ENCODE measurements at regions of chr21 and their contacts with region 1.

Region 1: DNA sequence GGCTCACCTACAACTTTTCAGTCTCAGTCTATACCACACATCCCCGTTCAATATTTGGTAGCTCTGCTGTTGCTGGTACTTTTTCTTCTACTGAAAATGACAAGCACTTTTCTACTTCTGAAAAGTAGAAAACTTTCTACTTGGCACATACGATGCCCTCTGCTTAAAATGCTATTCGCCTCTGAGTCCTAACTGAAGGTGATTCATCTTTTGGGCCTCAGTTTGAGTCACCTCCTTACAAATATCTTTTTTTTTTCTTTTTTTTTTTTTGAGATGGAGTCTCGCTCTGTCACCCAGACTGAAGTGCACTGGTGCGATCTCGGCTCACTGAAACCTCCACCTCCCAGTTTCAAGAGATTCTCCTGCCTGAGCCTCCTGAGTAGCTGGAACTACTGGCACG is 136.0 kb upstream of the CYYR1 start:
- DNase-seq: no peak
- H3K4me3 ChIP-seq: no peak overlapping the region
- H3K4me3 Mint-ChIP-seq: no peak overlapping the region
- H3K27ac ChIP-seq: no peak overlapping the region
- H3K27ac Mint-ChIP-seq: no peak overlapping the region
- H3K4me1 ChIP-seq: no peaks in the 10 kb centered on the region
- H3K4me1 Mint-ChIP-seq: no peaks in the 10 kb centered on the region
- H3K27me3 ChIP-seq: no peaks in the 10 kb centered on the region
- H3K27me3 Mint-ChIP-seq: no peaks in the 10 kb centered on the region
- CTCF ChIP-seq: no peak

Region 2: DNA sequence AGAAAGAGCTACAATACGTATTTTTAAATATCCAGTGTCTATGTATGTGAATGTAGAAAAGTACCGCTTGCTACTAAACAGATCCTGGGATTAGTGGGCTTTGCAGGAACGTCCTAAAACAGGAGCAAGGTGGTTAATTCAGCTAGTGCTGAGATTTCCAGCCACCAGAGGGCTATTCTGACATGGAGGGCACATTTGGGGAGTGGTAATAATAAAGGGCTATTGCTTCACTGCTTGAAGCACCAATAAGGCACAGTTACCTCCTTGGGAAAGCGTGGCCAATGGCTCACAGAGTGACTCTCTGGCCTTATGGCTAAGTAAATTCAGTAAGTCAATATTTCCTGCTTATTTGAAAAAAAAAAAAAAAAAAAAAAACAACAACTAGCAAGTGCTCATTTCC is 821.9 kb before region 1 on chr21:
- intact Hi-C with region 1: loop called in 1 of 2 experiments (anchors 5 kb)
- DNase-seq: no peak
- H3K4me3 ChIP-seq: no peak overlapping the region
- H3K4me3 Mint-ChIP-seq: no peak overlapping the region
- H3K27ac ChIP-seq: no peak overlapping the region
- H3K27ac Mint-ChIP-seq: no peak overlapping the region
- H3K4me1 ChIP-seq: no peaks in the 10 kb centered on the region
- H3K4me1 Mint-ChIP-seq: peaks cover 4% of the 10 kb centered on the region
- H3K27me3 ChIP-seq: no peaks in the 10 kb centered on the region
- H3K27me3 Mint-ChIP-seq: no peaks in the 10 kb centered on the region
- CTCF ChIP-seq: no peak

Region 3: DNA sequence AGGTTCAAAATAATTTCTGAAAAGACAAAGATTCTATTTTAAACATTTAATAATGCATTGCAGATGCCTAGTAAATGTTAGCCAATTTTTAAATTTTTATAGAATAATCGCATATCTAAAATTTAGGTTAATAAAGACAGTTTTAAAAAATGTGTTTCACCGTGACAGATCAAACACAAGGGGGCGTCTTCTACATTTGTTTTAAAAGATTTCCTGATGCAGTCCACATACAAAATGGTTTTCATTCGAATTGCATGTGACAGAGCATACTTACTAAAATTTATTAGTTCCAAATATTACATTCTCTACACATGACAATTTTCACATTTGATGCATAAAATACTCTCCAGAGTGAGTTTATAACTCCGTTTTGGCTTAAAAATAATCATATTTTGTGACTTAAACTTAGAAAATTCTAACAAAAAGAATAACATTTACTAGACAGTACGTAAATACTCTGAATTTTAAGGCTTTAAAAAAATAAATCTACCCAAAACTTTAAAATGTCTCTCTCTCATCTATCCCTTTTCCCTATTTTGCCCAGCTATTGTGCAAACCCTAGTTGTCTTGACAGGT is 60.6 kb after region 1 on chr21:
- intact Hi-C with region 1: loop called in 1 of 2 experiments (anchors 10 kb)
- DNase-seq: no peak
- H3K4me3 ChIP-seq: no peak overlapping the region
- H3K4me3 Mint-ChIP-seq: no peak overlapping the region
- H3K27ac ChIP-seq: no peak overlapping the region
- H3K27ac Mint-ChIP-seq: no peak overlapping the region
- H3K4me1 ChIP-seq: no peaks in the 10 kb centered on the region
- H3K4me1 Mint-ChIP-seq: no peaks in the 10 kb centered on the region
- H3K27me3 ChIP-seq: no peaks in the 10 kb centered on the region
- H3K27me3 Mint-ChIP-seq: peaks cover 0 to 2% (median 0%) of the 10 kb centered on the region in 3 donors
- CTCF ChIP-seq: peak; percentile 19

Region 4: DNA sequence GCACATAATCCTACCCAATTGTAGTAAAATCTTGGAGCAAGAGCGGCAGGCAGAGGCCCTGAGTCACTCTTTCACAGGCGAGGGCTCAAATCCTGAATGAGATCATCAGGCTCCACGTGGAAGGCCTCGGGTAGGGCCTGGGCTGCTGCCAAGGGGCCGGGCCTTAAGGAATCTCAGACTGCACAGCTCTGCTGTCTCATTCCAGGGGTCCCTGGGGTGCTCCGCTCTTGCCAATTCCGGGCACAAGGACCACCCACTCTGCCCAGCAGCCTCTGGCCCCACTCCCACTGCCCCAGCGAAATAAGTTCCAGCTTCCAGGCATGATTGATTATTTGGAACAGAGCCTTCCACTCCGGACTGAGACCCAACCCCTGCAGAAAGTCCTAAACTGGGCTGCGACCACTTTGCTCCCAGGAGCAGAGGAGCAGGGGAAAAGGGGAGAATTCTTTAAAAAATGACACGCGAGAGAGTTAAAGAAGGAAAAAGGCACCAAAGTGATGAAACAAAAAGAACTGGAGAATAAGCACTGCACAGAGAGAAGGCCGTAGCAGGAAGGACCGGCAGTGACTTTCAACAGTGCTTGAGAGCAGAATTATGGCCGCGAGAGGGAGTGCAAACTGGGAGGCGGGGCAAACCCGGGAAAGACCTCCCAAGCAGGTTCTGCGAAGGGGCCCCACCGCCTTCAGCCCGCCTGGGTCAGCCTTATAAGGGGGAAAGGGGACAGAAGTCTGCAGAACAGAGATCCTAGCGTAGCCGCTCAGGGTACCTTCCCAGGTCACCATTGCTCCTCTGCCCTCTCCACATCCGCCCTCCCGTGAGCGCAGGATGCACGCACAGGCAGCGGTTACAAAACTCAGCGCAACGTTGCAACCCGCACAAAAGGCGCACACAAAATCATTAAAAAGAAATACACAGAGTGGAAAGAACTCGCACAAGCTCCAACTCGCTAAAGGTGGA is 134.2 kb after region 1 on chr21:
- intact Hi-C with region 1: no loop called
- DNase-seq: no peak
- H3K4me3 ChIP-seq: peak overlapping the region in 1 of 3 experiments; percentile 59
- H3K4me3 Mint-ChIP-seq: peak overlapping the region; percentile 34 to 90
- H3K27ac ChIP-seq: no peak overlapping the region
- H3K27ac Mint-ChIP-seq: no peak overlapping the region
- H3K4me1 ChIP-seq: peaks cover 38 to 41% of the 10 kb centered on the region in 2 donors
- H3K4me1 Mint-ChIP-seq: peaks cover 36% of the 10 kb centered on the region
- H3K27me3 ChIP-seq: peaks cover 55 to 60% of the 10 kb centered on the region in 2 donors
- H3K27me3 Mint-ChIP-seq: peaks cover 59 to 61% (median 61%) of the 10 kb centered on the region in 3 donors
- CTCF ChIP-seq: no peak

Measured in CD14-positive monocyte (primary cell).